ENCODE measurements at regions of chr11 and their contacts with region 1.

Region 1: GRCh38 chr11:121591405-121592033 is 138.8 kb upstream of the SORL1-AS1 start:
- DNase-seq: peak; percentile 65
- H3K4me3 ChIP-seq: no peak overlapping the region
- H3K27ac ChIP-seq: no peak overlapping the region
- H3K4me1 ChIP-seq: peaks cover 16% of the 10 kb centered on the region
- H3K27me3 ChIP-seq: no peaks in the 10 kb centered on the region
- CTCF ChIP-seq: peak; percentile 82

Region 2: GRCh38 chr11:121249039-121249663 is 342.4 kb before region 1 on chr11:
- CTCF ChIA-PET with region 1: no interaction called
- dilution Hi-C with region 1: no loop called
- in situ Hi-C with region 1: no loop called
- intact Hi-C with region 1: loop called (anchors 1 kb)
- DNase-seq: peak; percentile 79
- H3K4me3 ChIP-seq: peak overlapping the region in 1 of 3 experiments; percentile 25
- H3K27ac ChIP-seq: no peak overlapping the region
- H3K4me1 ChIP-seq: peaks cover 11% of the 10 kb centered on the region
- H3K27me3 ChIP-seq: no peaks in the 10 kb centered on the region
- CTCF ChIP-seq: peak; percentile 71 to 76

Region 3: GRCh38 chr11:121318848-121319834 is 272.4 kb before region 1 on chr11:
- CTCF ChIA-PET with region 1: no interaction called
- dilution Hi-C with region 1: no loop called
- in situ Hi-C with region 1: loop called in 1 of 2 experiments (anchors 5 kb)
- intact Hi-C with region 1: loop called (anchors 1 kb)
- DNase-seq: peak; percentile 49
- H3K4me3 ChIP-seq: no peak overlapping the region
- H3K27ac ChIP-seq: no peak overlapping the region
- H3K4me1 ChIP-seq: peaks cover 4% of the 10 kb centered on the region
- H3K27me3 ChIP-seq: no peaks in the 10 kb centered on the region
- CTCF ChIP-seq: peak; percentile 79 to 89

Region 4: GRCh38 chr11:121446752-121447156 is 144.8 kb before region 1 on chr11:
- CTCF ChIA-PET with region 1: no interaction called
- dilution Hi-C with region 1: no loop called
- in situ Hi-C with region 1: loop called in 1 of 2 experiments (anchors 10 kb)
- intact Hi-C with region 1: loop called (anchors 1 kb)
- DNase-seq: no peak
- H3K4me3 ChIP-seq: no peak overlapping the region
- H3K27ac ChIP-seq: no peak overlapping the region
- H3K4me1 ChIP-seq: peaks cover 5% of the 10 kb centered on the region
- H3K27me3 ChIP-seq: no peaks in the 10 kb centered on the region
- CTCF ChIP-seq: peak; percentile 11 to 32

Region 5: GRCh38 chr11:121538054-121538453 is 53.5 kb before region 1 on chr11:
- CTCF ChIA-PET with region 1: no interaction called
- dilution Hi-C with region 1: no loop called
- in situ Hi-C with region 1: no loop called
- intact Hi-C with region 1: no loop called
- DNase-seq: no peak
- H3K4me3 ChIP-seq: no peak overlapping the region
- H3K27ac ChIP-seq: no peak overlapping the region
- H3K4me1 ChIP-seq: peaks cover 25% of the 10 kb centered on the region
- H3K27me3 ChIP-seq: no peaks in the 10 kb centered on the region
- CTCF ChIP-seq: no peak

Region 6: DNA sequence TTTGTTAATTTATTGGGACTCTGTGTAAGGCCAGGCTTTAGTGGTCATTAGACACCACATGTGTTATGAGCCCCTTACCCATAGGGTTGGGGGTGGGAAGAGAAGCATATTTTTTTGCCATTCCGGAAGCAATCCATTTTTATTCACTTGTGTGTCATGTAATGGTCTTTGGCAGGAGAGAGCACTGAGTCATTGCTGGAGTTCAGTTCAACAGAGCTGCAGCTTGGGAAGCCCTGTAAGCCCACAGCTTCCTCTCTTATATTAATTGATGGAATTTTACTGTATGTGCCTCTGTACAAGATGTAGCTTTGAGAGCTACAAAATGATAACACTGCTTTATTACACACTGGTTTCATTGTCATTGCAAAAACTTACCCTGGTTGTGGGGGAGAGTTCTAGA is 38.5 kb after region 1 on chr11:
- CTCF ChIA-PET with region 1: no interaction called
- dilution Hi-C with region 1: no loop called
- in situ Hi-C with region 1: no loop called
- intact Hi-C with region 1: no loop called
- DNase-seq: peak; percentile 49
- H3K4me3 ChIP-seq: no peak overlapping the region
- H3K27ac ChIP-seq: no peak overlapping the region
- H3K4me1 ChIP-seq: peaks cover 19% of the 10 kb centered on the region
- H3K27me3 ChIP-seq: no peaks in the 10 kb centered on the region
- CTCF ChIP-seq: no peak